Mammary epithelial cell (primary cell): ENCODE measurements at regions of chr14 and their contacts with region 1.

Region 1: DNA sequence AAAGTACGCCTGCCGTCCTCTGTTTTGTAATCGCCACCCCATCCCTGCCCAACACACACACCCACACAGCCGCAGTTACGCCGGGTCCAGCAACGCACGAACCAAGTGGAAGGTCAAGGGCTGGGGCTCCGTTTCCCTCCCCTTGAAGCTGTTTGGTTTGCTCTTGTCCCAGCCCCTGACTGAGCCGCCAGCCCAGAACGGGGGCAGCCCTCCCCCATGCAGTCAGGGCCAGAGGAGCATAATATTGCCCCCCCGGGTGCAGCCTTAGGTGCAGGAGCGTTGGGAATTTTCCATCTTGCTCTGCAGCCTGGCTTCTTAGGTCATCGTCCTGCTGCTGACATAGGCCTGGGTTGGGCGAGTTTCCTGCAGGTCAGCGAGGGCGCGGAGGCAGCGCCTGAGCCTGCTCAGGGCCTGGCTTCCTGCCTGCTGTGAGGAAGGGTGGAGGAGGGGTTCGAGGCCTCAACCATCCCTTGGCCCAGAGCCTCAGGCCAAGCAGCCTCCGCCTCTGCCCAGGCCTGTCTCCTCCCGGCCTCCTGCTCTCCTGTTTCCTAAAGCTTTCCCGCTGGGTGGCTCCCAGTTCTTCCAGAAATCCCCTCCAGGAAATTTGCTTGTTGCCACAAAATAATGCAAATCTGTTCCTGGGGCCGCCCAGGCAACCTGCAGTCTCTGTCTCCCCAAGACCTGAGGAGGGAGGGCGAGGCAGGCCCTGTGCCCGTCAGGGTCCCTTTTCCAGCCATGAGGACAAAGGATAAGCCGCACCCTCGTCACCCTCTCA is 44.5 kb downstream of the PSMA6 start:
- DNase-seq: peak; percentile 97
- H3K4me3 ChIP-seq: peak overlapping the region in 2 of 3 experiments; percentile 3 to 23
- H3K27ac ChIP-seq: peak overlapping the region; percentile 86
- H3K4me1 ChIP-seq: peaks cover 68% of the 10 kb centered on the region
- H3K27me3 ChIP-seq: no peaks in the 10 kb centered on the region
- CTCF ChIP-seq: peak in 1 of 2 donors; percentile 24

Region 2: DNA sequence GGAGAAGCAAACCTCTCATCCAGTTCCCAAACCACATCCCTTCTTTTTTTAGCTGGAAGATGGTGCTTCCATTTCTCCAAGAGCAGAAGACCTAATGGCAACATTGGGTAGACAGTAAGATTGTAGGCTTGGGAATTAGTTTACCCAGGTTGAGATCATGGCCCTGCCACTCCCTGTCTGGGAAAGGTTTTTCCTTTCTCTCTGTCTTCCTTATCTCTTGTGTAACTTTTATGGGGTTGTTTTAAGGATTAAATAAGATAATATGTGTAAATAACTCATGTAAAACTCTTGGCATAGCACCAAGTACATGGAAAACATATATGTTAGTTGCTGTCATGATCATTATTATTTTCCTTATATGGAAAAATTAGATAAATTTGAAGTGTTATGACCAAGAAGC is 67.7 kb before region 1 on chr14:
- CTCF ChIA-PET with region 1: no interaction called
- dilution Hi-C with region 1: loop called (anchors 5 kb)
- in situ Hi-C with region 1: no loop called
- intact Hi-C with region 1: no loop called
- DNase-seq: no peak
- H3K4me3 ChIP-seq: no peak overlapping the region
- H3K27ac ChIP-seq: no peak overlapping the region
- H3K4me1 ChIP-seq: no peaks in the 10 kb centered on the region
- H3K27me3 ChIP-seq: no peaks in the 10 kb centered on the region
- CTCF ChIP-seq: no peak

Region 3: DNA sequence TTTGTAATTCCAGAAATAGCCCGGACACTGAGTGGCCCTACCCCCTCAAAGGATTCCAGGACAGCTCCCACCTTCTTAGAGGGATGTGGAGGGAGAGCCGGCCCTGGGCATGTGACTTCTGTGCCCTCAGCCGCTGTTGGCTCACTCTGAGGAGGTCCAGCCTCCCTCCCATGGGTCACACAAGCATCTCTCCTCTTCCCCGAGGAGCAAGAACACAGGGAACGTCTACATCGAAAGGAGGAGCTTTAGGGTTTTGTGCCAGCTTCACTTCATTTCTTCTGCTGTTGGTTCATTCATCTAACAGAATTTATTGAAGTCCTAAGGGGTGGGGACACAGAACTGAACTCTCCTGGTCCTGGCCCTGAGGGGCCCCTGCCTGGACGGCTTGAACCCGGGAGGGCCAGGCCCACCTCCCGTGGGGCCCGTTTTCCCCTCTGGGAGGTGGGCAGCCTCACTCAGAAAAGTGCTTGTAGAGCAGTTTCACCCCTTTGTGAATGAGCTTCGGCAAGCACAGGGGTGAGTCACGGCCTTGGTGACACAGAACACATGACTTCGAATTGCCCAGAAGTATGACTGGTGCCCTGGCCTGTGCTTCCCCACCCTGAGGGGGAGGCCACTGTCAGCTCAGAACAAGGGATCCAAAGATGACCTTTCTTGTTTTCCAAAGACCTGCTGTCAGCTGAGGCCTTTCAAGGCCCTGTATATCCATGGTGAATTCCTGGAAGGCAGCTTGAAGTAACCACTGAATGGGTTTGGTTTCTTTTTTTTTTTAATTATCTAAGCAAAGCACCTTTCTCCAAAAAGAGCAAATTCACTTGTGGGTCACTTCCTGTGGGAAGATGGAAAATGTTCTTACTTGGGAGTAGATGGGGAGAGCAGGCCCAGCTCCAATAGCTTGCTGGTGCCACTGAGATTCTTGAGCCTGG is 28.7 kb after region 1 on chr14:
- CTCF ChIA-PET with region 1: no interaction called
- dilution Hi-C with region 1: no loop called
- in situ Hi-C with region 1: no loop called
- intact Hi-C with region 1: loop called (anchors 2 kb)
- DNase-seq: peak; percentile 92
- H3K4me3 ChIP-seq: no peak overlapping the region
- H3K27ac ChIP-seq: peak overlapping the region; percentile 79
- H3K4me1 ChIP-seq: peaks cover 29% of the 10 kb centered on the region
- H3K27me3 ChIP-seq: no peaks in the 10 kb centered on the region
- CTCF ChIP-seq: no peak

Region 4: DNA sequence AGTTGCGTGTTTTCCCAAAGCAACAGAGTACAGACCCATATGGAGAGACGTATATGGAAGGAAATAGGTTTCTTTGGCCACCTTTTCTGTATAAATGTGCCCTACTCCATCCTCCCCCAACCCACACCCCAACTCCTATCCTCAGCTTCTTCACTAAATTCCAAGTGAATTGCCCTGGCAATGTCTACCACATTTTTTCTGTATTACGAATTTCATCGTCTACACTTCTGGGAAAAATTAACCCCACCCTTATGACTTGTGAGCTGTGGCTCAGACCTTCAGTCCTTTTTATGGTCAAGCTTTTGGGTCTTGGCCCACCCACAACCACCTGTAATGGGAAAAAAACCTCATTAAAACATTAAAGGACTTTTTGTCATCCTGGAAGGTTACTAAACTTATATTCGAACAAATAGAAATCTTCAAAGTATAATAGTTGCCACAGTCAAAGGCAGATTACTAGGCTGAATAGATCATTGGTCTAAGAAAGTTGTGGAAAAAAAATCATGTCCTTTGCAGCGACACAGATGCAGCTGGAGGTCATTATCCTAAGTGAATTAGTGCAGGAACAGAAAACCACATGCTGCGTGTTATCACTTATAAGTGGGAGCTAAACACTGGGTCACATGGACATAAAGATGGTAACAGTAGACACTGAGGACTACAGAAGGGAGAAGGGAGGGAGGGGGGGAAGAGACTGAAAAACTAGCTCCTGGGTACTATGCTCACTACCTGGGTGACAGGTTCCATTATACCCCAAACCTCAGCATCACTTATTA is 83.5 kb after region 1 on chr14:
- CTCF ChIA-PET with region 1: no interaction called
- dilution Hi-C with region 1: no loop called
- in situ Hi-C with region 1: no loop called
- intact Hi-C with region 1: no loop called
- DNase-seq: peak; percentile 53
- H3K4me3 ChIP-seq: no peak overlapping the region
- H3K27ac ChIP-seq: no peak overlapping the region
- H3K4me1 ChIP-seq: peaks cover 11% of the 10 kb centered on the region
- H3K27me3 ChIP-seq: no peaks in the 10 kb centered on the region
- CTCF ChIP-seq: no peak